ENCODE measurements at regions of chr14 and their contacts with region 1.

Region 1: GRCh38 chr14:80941241-80942182 is at the start of gene CEP128:
- DNase-seq: peak; percentile 97
- ATAC-seq: peak; percentile 100
- total RNA-seq, gene CEP128: 4.0 to 5.2 TPM

Region 2: DNA sequence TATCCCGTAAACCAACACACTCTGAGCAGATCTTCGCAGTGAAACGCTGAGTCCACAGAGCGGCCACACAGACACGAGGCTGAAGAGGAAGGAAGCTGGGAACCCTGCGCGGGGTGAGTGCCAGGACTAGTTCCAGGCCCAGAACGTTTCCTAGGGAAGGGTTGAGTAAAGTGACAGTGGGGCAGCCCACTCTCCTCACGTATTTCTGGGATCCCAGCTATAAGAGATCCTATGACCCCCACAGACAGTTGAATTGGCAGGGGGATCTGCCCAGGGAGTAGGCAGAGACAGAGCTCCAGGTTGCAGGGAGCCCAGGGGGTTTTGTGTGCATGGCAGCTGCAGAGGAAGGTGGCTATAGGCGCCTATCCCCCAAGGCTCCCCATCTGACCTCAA is 228.2 kb after region 1 on chr14:
- intact Hi-C with region 1: loop called in 1 of 2 experiments (anchors 5 kb)
- DNase-seq: peak; percentile 71
- ATAC-seq: peak; percentile 78 to 81

Measured in left cardiac atrium (tissue), 4 donors.